Heart left ventricle (tissue), 16 donors: ENCODE measurements at regions of chr2 and their contacts with region 1.

Region 1: DNA sequence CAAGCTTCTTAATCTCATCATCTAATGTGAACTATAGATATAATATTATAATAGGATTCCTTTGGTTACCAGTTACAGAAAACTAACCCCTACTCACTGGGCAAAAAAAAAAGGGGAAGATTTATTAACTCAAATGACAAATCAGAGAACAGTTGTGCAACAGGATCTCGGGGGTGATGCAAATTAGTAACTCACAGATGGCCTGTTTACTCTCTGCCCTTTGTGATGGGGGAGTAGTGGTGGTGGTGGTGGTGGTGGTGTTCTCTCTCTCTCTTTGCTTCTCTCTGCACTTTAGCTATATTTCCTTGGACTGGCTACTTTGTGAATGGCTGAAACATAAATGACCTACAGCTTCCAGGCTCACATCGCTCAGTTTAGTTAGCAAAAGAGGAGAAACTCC is 59.0 kb downstream of the TMEM247 start:
- DNase-seq: no peak
- ATAC-seq: no peak
- H3K4me3 ChIP-seq: no peak overlapping the region
- H3K27ac ChIP-seq: peak overlapping the region in 5 of 12 donors; percentile 19 to 62 (median 58)
- H3K4me1 ChIP-seq: peaks cover 5 to 81% (median 21%) of the 10 kb centered on the region in 12 donors
- H3K27me3 ChIP-seq: no peaks in the 10 kb centered on the region
- CTCF ChIP-seq: no peak
- POLR2A ChIP-seq: no peak

Region 2: DNA sequence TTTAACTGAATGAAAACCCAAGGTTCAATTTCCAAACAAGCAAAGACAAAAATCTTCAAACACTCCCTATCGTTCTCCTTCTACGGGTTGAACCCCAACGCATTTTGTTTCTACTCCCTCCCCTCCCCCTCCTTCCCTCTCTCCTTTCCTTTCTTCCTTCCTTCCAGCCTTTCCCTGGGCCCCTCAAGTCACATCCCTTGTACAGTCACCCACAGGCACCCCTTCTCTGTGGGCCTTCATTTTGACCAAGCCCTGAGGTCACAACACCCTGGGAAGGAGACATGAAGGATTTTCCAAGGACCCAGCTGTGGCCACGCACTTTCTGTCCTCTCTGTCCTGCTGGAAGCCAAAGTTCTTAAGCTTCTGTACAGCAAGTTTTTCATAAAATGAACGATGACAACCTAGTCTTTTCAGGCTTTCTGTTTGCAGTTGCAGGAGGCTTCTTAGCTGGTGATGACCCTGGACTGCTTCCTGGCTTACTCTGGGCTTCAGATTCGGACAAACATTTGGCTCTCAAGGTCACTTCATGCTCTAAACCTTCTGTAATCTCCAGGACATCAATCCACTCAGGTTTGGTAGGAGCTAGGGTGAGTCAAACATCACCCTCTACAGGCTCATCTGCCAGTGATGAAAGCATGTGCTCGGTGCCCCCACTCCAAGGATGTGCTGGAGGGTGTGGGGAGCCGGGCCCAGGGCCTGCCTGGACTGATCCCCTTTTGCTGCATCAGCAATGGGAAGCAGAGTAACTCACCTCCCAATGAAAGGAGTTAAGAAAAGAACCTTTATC is 33.5 kb before region 1 on chr2:
- intact Hi-C with region 1: loop called in 1 of 10 experiments (anchors 2 kb)
- DNase-seq: no peak
- ATAC-seq: no peak
- H3K4me3 ChIP-seq: no peak overlapping the region
- H3K27ac ChIP-seq: no peak overlapping the region
- H3K4me1 ChIP-seq: peaks cover 0 to 15% (median 4%) of the 10 kb centered on the region in 12 donors
- H3K27me3 ChIP-seq: no peaks in the 10 kb centered on the region
- CTCF ChIP-seq: no peak
- POLR2A ChIP-seq: no peak